Natural killer cell (primary cell): ENCODE measurements at regions of chr4 and their contacts with region 1.

Region 1: DNA sequence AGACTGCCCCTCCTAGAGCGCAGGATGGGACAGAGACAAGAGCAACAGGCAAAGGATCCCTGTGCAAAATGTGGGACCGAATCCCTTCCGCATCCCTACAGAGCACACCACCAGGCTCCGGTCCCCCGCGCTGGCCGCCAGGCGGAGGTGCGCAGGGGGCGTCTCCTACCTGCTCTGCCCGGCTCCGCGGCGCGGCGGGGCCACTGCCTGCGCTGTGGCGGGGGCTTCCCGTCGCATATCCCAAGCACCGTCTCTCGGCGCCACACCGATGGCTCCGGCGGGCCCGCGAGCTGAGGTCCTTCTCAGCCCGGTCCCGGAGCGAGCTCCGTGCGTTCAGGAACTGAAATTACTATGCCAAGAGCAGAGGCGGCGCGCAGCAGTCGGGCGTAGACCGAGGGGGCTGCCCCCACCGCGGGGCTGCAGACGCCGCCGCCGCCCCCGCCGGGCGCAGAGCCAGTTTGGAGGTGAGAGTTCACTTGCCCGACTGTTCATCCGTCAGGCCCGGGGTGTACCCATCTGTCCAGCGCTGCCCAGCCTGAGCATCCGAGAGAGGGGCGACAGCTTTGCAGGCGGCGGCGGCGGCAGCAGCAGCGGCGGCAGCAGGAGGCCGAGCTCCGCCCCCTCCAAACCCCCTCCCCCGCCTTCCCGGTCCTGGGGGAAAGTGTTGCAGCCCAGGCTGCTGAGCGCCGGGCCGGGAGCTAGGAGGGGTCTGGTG is at the start of gene GPRIN3:
- DNase-seq: peak; percentile 69 to 81
- ATAC-seq: peak; percentile 64 to 78 (median 75)
- H3K4me3 ChIP-seq: peak within 1 kb of the TSS; percentile 75
- H3K4me3 Mint-ChIP-seq: peak within 1 kb of the TSS; percentile 91
- H3K27ac ChIP-seq: peak within 1 kb of the TSS; percentile 67
- H3K27ac Mint-ChIP-seq: peak within 1 kb of the TSS in 1 of 2 donors; percentile 96
- H3K4me1 ChIP-seq: peaks cover 22% of the 10 kb centered on the region
- H3K4me1 Mint-ChIP-seq: peaks cover 54 to 56% of the 10 kb centered on the region in 2 donors
- H3K27me3 ChIP-seq: no peaks in the 10 kb centered on the region
- H3K27me3 Mint-ChIP-seq: no peaks in the 10 kb centered on the region
- CTCF ChIP-seq: no peak
- total RNA-seq, gene GPRIN3: 48.3 to 50.7 (median 48.5) TPM

Region 2: DNA sequence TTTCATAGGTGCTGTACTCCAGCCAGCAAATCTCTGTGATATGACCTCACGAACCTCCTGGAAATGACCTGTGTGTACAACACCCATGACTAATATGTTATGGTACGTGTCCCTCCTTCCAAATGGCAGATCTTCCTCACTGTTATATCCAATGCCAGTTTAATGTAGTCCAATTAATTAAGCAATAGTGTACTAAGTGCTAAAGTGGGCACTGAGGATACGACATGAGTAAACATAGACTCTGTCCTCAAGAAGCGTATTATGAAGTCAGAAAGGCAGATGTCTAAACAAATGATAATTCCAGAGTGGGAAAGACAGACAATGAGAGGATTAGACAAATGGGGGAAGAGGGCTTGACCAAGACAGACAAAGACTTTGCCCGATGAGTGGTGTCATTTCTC is 33.9 kb before region 1 on chr4:
- intact Hi-C with region 1: loop called (anchors 5 kb)
- DNase-seq: no peak
- ATAC-seq: no peak
- H3K4me3 ChIP-seq: no peak overlapping the region
- H3K4me3 Mint-ChIP-seq: no peak overlapping the region
- H3K27ac ChIP-seq: no peak overlapping the region
- H3K27ac Mint-ChIP-seq: peak overlapping the region in 1 of 2 donors; percentile 69
- H3K4me1 ChIP-seq: peaks cover 14% of the 10 kb centered on the region
- H3K4me1 Mint-ChIP-seq: peaks cover 66% of the 10 kb centered on the region in 2 donors
- H3K27me3 ChIP-seq: no peaks in the 10 kb centered on the region
- H3K27me3 Mint-ChIP-seq: no peaks in the 10 kb centered on the region
- CTCF ChIP-seq: no peak